Dorsolateral prefrontal cortex (tissue), 120 donors: ENCODE measurements at regions of chr12 and their contacts with region 1.

Region 1: GRCh38 chr12:69157023-69157655 is 82.2 kb upstream of the CPSF6 start:
- DNase-seq: peak; percentile 44 to 89 (median 80)
- H3K4me3 ChIP-seq: peak overlapping the region in 45 of 59 donors; percentile 5 to 55 (median 33)
- H3K27ac ChIP-seq: peak overlapping the region in 2 of 59 donors; percentile 7 to 8
- H3K27me3 ChIP-seq: no peaks in the 10 kb centered on the region
- CTCF ChIP-seq: peak; percentile 58 to 97 (median 90)

Region 2: GRCh38 chr12:68831272-68831671 is 325.9 kb before region 1 on chr12:
- intact Hi-C with region 1: loop called (anchors 10 kb)
- DNase-seq: no peak
- H3K4me3 ChIP-seq: no peak overlapping the region
- H3K27ac ChIP-seq: peak overlapping the region in 4 of 59 donors; percentile 5 to 20 (median 12)
- H3K27me3 ChIP-seq: no peaks in the 10 kb centered on the region
- CTCF ChIP-seq: no peak

Region 3: GRCh38 chr12:68866950-68867349 is 290.2 kb before region 1 on chr12:
- intact Hi-C with region 1: loop called (anchors 10 kb)
- DNase-seq: no peak
- H3K4me3 ChIP-seq: no peak overlapping the region
- H3K27ac ChIP-seq: peak overlapping the region in 6 of 59 donors; percentile 30 to 71 (median 52)
- H3K27me3 ChIP-seq: no peaks in the 10 kb centered on the region
- CTCF ChIP-seq: no peak

Region 4: GRCh38 chr12:69239352-69239921 is 82.3 kb after region 1 on chr12 and contains the start of gene CPSF6:
- intact Hi-C with region 1: loop called in 1 of 2 experiments (anchors 5 kb)
- DNase-seq: peak; percentile 89 to 98 (median 95)
- H3K4me3 ChIP-seq: peak within 1 kb of the TSS; percentile 43 to 95 (median 84)
- H3K27ac ChIP-seq: peak within 1 kb of the TSS; percentile 72 to 98 (median 92)
- H3K27me3 ChIP-seq: no peaks in the 10 kb centered on the region
- CTCF ChIP-seq: peak in 41 of 56 donors; percentile 8 to 61 (median 34)
- total RNA-seq, gene CPSF6: 76.6 to 122 (median 94.4) TPM

Region 5: GRCh38 chr12:69254046-69254445 is 96.9 kb after region 1 on chr12:
- intact Hi-C with region 1: loop called (anchors 2 kb)
- DNase-seq: no peak
- H3K4me3 ChIP-seq: no peak overlapping the region
- H3K27ac ChIP-seq: peak overlapping the region in 2 of 59 donors; percentile 13 to 26
- H3K27me3 ChIP-seq: no peaks in the 10 kb centered on the region
- CTCF ChIP-seq: peak; percentile 54 to 90 (median 76)

Region 6: GRCh38 chr12:69527506-69528272 is 370.6 kb after region 1 on chr12:
- intact Hi-C with region 1: no loop called
- DNase-seq: no peak
- H3K4me3 ChIP-seq: no peak overlapping the region
- H3K27ac ChIP-seq: peak overlapping the region in 5 of 59 donors; percentile 2 to 41 (median 20)
- H3K27me3 ChIP-seq: no peaks in the 10 kb centered on the region
- CTCF ChIP-seq: no peak